ENCODE measurements at regions of chr3 and their contacts with region 1.

Region 1: GRCh38 chr3:69671082-69671952 is 67.9 kb upstream of the MITF start:
- DNase-seq: peak; percentile 15
- ATAC-seq: peak; percentile 47; the same call in 1 of the 2 replicates
- H3K4me3 ChIP-seq: no peak overlapping the region
- H3K27ac ChIP-seq: no peak overlapping the region
- H3K4me1 ChIP-seq: no peaks in the 10 kb centered on the region
- H3K27me3 ChIP-seq: no peaks in the 10 kb centered on the region
- CTCF ChIP-seq: peak; percentile 38 to 73 (median 49); a peak in 5 of 6 replicates
- POLR2A ChIP-seq: no peak
- RAD21 ChIP-seq: peak; percentile 67

Region 2: DNA sequence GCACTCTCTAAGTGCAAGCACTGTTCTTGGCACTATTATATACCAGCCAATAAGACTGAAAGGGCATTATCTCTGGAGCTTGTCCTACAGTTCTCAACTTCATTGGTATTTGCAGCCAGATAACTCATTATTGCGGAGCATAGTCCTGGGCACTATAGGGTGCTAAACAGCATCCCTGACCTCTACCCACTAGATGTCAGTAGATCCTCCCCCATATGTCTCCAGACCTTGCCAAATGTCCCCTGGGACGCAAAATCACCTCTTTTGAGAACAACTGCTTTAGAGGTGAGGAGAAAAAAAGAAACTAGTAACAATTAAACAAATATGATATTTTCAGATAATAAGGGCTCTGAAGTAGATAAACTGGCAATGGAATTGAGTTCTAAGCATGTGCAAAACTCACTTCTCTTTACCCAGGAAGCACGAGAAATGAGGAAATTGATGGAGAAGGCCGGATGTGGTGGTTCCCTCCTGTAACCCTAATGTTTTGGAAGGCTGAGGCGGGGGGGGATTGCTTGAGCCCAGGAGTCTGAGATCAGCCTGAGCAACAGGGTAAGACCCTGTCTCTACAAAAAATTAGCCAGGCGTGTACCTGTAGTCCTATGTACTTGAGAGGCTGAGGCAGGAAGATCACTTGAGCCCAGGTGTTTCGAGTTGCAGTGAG is 346.8 kb before region 1 on chr3:
- CTCF ChIA-PET with region 1: no interaction called
- POLR2A ChIA-PET with region 1: no interaction called
- RAD21 ChIA-PET with region 1: no interaction called
- intact Hi-C with region 1: loop called (anchors 2 kb)
- DNase-seq: no peak
- ATAC-seq: peak; percentile 80
- H3K4me3 ChIP-seq: no peak overlapping the region
- H3K27ac ChIP-seq: no peak overlapping the region
- H3K4me1 ChIP-seq: no peaks in the 10 kb centered on the region
- H3K27me3 ChIP-seq: no peaks in the 10 kb centered on the region
- CTCF ChIP-seq: peak; percentile 12 to 46 (median 41); a peak in 5 of 6 replicates
- POLR2A ChIP-seq: no peak
- RAD21 ChIP-seq: peak; percentile 52